ENCODE measurements at regions of chr5 and their contacts with region 1.

Region 1: GRCh38 chr5:66828548-66829357 is 232.6 kb downstream of the MAST4 start:
- DNase-seq: peak; percentile 46 to 73
- ATAC-seq: peak; percentile 91 to 96 (median 95)
- H3K4me3 ChIP-seq: peak overlapping the region; percentile 30 to 59 (median 55)
- H3K27ac ChIP-seq: peak overlapping the region; percentile 31 to 80 (median 72)
- H3K4me1 ChIP-seq: peaks cover 0 to 59% (median 27%) of the 10 kb centered on the region in 9 donors
- H3K27me3 ChIP-seq: peaks cover 0 to 9% (median 0%) of the 10 kb centered on the region in 7 donors
- CTCF ChIP-seq: no peak

Region 2: GRCh38 chr5:66727630-66728029 is 101.1 kb before region 1 on chr5:
- intact Hi-C with region 1: no loop called
- DNase-seq: no peak
- ATAC-seq: no peak
- H3K4me3 ChIP-seq: no peak overlapping the region
- H3K27ac ChIP-seq: no peak overlapping the region
- H3K4me1 ChIP-seq: peaks cover 0 to 10% (median 0%) of the 10 kb centered on the region in 9 donors
- H3K27me3 ChIP-seq: no peaks in the 10 kb centered on the region
- CTCF ChIP-seq: no peak

Region 3: DNA sequence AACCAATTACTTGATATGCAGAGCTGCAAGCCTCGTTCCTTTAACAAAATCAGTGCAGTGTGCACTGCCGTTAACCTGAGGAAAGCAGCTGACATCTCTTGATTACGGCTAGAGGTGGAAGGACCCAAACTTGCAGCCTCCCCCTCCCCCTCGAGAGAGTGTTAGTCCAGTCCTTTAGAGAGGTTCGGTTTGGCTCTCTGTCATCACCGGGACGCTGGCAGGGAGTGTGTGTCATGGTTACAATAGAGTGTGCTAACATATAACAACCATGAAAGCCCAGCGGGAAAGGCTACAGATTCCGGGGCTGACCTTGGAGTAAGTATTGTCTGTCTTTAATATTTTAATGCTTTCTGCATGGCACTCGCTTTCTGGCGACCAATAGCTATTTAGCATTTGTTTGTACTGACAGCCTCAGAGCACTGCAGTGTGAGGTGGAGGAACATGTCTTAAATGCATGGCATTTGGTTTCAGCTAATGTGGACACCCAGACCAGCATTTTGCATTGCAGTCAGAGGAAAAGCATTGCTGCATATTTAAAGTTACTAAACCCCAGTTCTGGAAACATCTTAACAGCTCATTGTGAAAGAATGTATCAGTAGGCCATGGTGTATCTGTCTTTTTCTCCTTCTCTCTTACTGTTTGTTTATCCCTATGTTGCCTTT is 130.4 kb after region 1 on chr5:
- intact Hi-C with region 1: loop called in 2 of 10 experiments (anchors 5 kb)
- DNase-seq: peak; percentile 39 to 49
- ATAC-seq: peak; percentile 47 to 79 (median 70)
- H3K4me3 ChIP-seq: peak overlapping the region; percentile 0 to 56 (median 47)
- H3K27ac ChIP-seq: peak overlapping the region; percentile 16 to 80 (median 64)
- H3K4me1 ChIP-seq: peaks cover 0 to 59% (median 38%) of the 10 kb centered on the region in 9 donors
- H3K27me3 ChIP-seq: no peaks in the 10 kb centered on the region
- CTCF ChIP-seq: no peak

Measured in heart right ventricle (tissue), 16 donors.